Left cardiac atrium (tissue), 4 donors: ENCODE measurements at regions of chr22 and their contacts with region 1.

Region 1: GRCh38 chr22:24423519-24424000 is 3.8 kb upstream of the ADORA2A start:
- DNase-seq: peak; percentile 73
- ATAC-seq: peak; percentile 78 to 81

Region 2: DNA sequence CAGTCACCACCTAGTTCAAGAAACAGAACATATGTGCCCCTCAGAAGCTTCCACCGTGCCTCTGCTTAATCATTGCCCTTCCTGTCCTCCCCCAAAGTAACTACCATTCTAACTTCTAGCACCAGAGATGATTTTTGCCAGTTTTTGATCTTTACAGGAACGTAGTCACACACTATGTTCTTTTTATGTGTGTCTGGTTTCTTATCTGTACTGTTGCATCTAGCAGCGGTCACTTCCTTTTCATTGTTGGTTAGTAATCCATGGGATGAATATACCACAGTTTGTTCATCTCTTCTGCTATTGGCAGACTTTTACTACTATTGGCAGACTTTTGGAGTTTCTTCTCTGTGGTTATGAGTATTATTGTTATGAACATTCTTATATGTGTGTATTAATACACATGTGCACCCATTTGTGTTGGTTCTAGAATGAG is 118.3 kb before region 1 on chr22:
- intact Hi-C with region 1: no loop called
- DNase-seq: no peak
- ATAC-seq: no peak

Region 3: GRCh38 chr22:24338726-24339451 is 84.7 kb before region 1 on chr22:
- intact Hi-C with region 1: no loop called
- DNase-seq: no peak
- ATAC-seq: peak; percentile 77 to 86

Region 4: GRCh38 chr22:24355574-24355973 is 68.0 kb before region 1 on chr22:
- intact Hi-C with region 1: no loop called
- DNase-seq: no peak
- ATAC-seq: no peak

Region 5: DNA sequence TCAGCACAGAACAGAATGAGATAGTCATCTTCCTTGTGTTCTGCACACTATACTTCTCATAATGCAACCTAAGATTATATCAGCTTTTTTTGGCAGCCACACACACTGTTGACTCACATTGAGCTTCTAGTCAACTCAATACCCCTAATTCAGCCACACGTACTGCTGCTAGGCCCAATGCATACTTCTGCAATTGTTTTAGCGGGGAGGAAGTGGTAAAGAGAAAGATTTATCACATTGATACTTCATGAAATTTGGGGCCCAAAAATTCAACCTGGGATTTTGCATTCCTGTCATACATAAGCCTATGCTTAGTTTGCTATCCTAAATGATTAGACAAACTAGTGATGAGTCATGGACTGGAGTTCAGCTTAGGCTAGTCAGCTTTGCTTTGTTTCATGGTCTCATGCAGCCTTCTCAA is 63.0 kb after region 1 on chr22:
- intact Hi-C with region 1: loop called (anchors 5 kb)
- DNase-seq: no peak
- ATAC-seq: no peak

Region 6: DNA sequence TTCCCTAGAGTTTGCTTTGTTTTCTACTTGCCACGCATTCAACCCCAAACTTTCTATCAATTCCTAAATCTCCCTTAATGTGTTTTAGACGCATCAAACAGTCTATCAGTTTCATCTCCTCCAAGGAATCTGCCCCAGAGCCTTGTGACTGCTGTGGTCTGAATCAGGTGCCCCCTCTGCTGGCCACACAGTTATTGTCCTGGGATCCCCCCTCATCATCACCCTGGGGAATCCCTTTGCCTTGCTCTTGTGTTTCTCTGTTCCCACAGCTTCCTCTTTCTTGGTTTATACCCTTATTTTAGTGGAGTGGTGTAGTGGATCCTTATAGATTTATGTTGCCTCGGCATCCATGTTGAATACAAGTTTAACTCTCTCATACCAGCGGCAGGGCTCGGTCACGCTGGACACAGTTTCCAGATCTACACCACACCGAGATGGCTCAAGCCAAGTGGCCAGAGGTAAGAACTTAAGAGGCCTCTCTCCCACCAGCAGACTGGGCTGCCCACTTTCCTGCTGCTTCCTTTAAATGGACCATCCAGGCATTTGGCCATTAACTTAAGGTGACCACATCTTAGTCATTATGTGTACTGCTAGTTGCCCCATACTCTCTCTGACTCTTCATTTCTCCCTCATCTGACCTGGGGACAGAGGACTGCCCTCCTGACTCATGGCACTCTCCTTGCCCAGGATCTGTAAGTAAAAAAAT is 79.7 kb after region 1 on chr22:
- intact Hi-C with region 1: loop called in 1 of 2 experiments (anchors 5 kb)
- DNase-seq: peak; percentile 68
- ATAC-seq: peak; percentile 60 to 68

Region 7: DNA sequence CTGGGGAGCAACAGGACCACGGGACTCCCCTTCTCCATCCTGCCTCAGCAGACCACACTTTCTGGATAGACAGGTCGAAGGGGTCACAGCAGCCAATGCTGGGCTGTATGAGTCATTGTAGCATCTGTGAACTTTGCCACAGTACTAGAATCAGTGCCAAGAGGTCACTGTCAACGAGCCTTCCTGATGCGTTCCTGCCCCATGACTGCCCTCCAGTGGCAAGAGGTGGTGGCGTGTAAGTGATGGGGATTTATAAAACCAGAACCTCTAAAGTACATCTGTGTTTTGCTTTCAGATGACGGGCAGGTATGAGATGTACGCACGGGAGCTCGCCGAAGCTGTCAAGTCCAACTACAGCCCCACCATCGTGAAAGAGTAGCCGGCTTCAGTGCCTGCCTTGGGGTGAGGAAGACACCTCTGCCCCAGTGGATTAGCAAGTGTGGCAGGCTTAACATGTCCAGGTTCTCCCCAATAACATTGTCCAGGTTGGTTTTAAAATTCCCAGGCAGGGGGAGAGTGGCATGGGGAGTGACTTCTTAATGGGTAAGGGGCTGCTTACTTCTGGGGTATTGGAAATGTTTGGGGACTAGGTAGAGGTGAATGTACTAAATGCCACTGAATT is 102.0 kb after region 1 on chr22:
- intact Hi-C with region 1: loop called in 1 of 2 experiments (anchors 5 kb)
- DNase-seq: peak; percentile 85
- ATAC-seq: peak; percentile 69 to 78